ENCODE measurements at regions of chr10 and their contacts with region 1.

Region 1: DNA sequence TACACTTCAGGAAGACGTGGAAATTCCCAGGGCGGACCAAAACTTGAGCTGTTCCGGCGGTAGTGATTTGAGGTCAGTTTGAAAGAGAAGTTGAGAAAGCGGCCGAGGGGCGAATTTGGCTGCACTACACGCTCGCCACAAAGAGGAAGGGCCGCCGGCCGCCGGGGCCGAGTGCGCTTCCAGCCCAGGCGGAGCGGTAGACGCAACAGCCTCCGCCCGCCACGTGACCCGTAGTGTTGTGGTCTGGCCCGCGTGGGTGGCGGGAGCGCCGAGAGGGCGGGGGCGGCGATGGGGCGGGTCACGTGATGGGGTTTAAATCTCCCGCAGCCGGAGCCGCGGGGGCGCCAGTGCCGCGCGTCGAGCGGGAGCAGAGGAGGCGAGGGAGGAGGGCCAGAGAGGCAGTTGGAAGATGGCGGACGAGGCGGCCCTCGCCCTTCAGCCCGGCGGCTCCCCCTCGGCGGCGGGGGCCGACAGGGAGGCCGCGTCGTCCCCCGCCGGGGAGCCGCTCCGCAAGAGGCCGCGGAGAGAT is at the start of gene SIRT1:
- DNase-seq: peak; percentile 93
- H3K4me3 Mint-ChIP-seq: peak within 1 kb of the TSS; percentile 93
- H3K27ac Mint-ChIP-seq: peak within 1 kb of the TSS; percentile 88
- H3K4me1 Mint-ChIP-seq: peaks cover 28% of the 10 kb centered on the region
- H3K27me3 Mint-ChIP-seq: no peaks in the 10 kb centered on the region
- total RNA-seq, gene SIRT1: 29.9 to 32.0 TPM

Region 2: GRCh38 chr10:67764012-67764822 is 120.2 kb before region 1 on chr10:
- CTCF ChIA-PET with region 1: no interaction called
- POLR2A ChIA-PET with region 1: no interaction called
- intact Hi-C with region 1: loop called (anchors 1 kb)
- DNase-seq: peak; percentile 98
- H3K4me3 Mint-ChIP-seq: peak overlapping the region; percentile 78
- H3K27ac Mint-ChIP-seq: peak overlapping the region; percentile 91
- H3K4me1 Mint-ChIP-seq: peaks cover 11% of the 10 kb centered on the region
- H3K27me3 Mint-ChIP-seq: peaks cover 4% of the 10 kb centered on the region

Region 3: GRCh38 chr10:67903581-67903980 is 19.2 kb after region 1 on chr10:
- CTCF ChIA-PET with region 1: no interaction called
- POLR2A ChIA-PET with region 1: interaction called, 3 read pairs
- intact Hi-C with region 1: loop called (anchors 2 kb)
- DNase-seq: no peak
- H3K4me3 Mint-ChIP-seq: no peak overlapping the region
- H3K27ac Mint-ChIP-seq: no peak overlapping the region
- H3K4me1 Mint-ChIP-seq: peaks cover 16% of the 10 kb centered on the region
- H3K27me3 Mint-ChIP-seq: no peaks in the 10 kb centered on the region

Region 4: GRCh38 chr10:67912339-67912946 is 28.1 kb after region 1 on chr10:
- CTCF ChIA-PET with region 1: interaction called, 5 read pairs
- POLR2A ChIA-PET with region 1: interaction called, 3 read pairs
- intact Hi-C with region 1: loop called (anchors 2 kb)
- DNase-seq: no peak
- H3K4me3 Mint-ChIP-seq: no peak overlapping the region
- H3K27ac Mint-ChIP-seq: peak overlapping the region; percentile 75
- H3K4me1 Mint-ChIP-seq: peaks cover 37% of the 10 kb centered on the region
- H3K27me3 Mint-ChIP-seq: no peaks in the 10 kb centered on the region

Region 5: GRCh38 chr10:68007356-68007755 is 123.0 kb after region 1 on chr10:
- CTCF ChIA-PET with region 1: no interaction called
- POLR2A ChIA-PET with region 1: no interaction called
- intact Hi-C with region 1: no loop called
- DNase-seq: no peak
- H3K4me3 Mint-ChIP-seq: no peak overlapping the region
- H3K27ac Mint-ChIP-seq: no peak overlapping the region
- H3K4me1 Mint-ChIP-seq: no peaks in the 10 kb centered on the region
- H3K27me3 Mint-ChIP-seq: no peaks in the 10 kb centered on the region

Region 6: DNA sequence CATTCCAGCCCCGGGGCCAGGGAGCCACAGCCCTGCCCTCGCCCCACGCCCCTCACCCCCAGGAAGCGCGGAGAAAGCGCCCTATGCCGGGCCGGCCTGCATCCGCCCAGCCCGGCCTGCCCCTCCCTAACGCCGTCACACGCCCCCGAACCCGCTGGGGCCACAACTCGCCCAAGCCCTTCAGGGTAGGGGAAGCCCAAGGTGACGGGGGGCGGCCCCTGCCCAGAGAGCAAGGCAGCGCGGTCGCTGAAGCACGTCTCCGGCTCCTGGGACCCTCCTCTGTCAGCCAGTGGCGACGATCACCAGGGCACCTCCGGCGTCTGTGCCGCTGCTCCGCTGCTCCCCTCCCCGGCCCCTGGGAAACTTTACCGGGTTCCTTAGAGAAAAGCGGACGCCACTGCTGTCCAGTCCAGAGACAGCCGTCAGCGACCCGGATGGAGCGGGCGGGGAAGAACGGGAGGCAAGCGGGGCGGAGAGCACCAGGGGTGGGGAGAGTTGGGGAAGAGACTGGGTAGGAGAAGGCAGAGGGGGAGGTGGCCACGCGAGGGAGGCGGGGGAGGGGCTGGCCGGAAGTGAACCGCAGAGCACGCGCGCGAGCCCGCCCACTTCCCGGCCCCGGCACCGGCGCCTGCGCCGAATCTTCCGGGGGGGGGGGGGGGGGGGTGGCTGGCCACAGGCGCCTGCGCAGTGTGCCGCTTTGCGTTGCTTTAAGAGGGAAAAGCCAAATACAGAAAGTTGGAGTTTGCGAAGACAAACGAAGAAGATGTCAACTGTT is 190.6 kb after region 1 on chr10 and contains the start of gene HERC4:
- CTCF ChIA-PET with region 1: interaction called, 3 read pairs
- POLR2A ChIA-PET with region 1: no interaction called
- intact Hi-C with region 1: loop called (anchors 1 kb)
- DNase-seq: peak; percentile 94
- H3K4me3 Mint-ChIP-seq: peak within 1 kb of the TSS; percentile 89
- H3K27ac Mint-ChIP-seq: peak within 1 kb of the TSS; percentile 89
- H3K4me1 Mint-ChIP-seq: peaks cover 35% of the 10 kb centered on the region
- H3K27me3 Mint-ChIP-seq: no peaks in the 10 kb centered on the region
- total RNA-seq, gene HERC4: 55.7 to 59.0 TPM

Region 7: GRCh38 chr10:68110027-68110426 is 225.7 kb after region 1 on chr10:
- CTCF ChIA-PET with region 1: no interaction called
- POLR2A ChIA-PET with region 1: no interaction called
- intact Hi-C with region 1: no loop called
- DNase-seq: no peak
- H3K4me3 Mint-ChIP-seq: no peak overlapping the region
- H3K27ac Mint-ChIP-seq: no peak overlapping the region
- H3K4me1 Mint-ChIP-seq: no peaks in the 10 kb centered on the region
- H3K27me3 Mint-ChIP-seq: peaks cover 2% of the 10 kb centered on the region

Measured in activated CD4-positive, alpha-beta memory T cell treated with anti-CD3 and anti-CD28 coated beads for 36 hours (primary cell).